ENCODE measurements at regions of chr7 and their contacts with region 1.

Region 1: GRCh38 chr7:73482746-73483145 is 39.3 kb downstream of the BAZ1B start:
- DNase-seq: no peak
- ATAC-seq: 0 out of 2 replicates have a peak, but pooled peaks have one; percentile 27
- H3K4me3 ChIP-seq: no peak overlapping the region
- H3K27ac ChIP-seq: no peak overlapping the region
- H3K4me1 ChIP-seq: no peaks in the 10 kb centered on the region
- H3K27me3 ChIP-seq: no peaks in the 10 kb centered on the region
- CTCF ChIP-seq: no peak

Region 2: DNA sequence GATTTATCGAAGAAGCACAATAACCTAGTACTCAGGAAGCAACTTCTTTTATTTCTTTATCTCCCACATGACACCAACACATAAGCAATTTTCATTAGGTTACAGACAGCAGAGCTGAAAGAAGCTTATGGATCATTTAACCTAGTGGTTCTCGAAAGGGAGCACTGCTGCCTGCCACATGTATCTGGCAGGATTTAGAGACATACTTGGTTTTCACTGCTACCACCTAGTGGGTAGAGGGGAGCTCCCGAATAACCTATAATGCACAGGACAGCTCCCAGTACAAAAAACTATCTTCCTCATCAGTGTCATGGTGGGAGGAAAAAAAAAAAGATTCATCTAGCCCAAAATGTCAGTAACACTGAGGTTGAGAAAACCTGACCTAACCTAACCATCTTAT is 14.6 kb before region 1 on chr7:
- CTCF ChIA-PET with region 1: no interaction called
- POLR2A ChIA-PET with region 1: interaction called, 12 read pairs
- in situ Hi-C with region 1: no loop called
- intact Hi-C with region 1: no loop called
- DNase-seq: no peak
- ATAC-seq: no peak
- H3K4me3 ChIP-seq: no peak overlapping the region
- H3K27ac ChIP-seq: no peak overlapping the region
- H3K4me1 ChIP-seq: no peaks in the 10 kb centered on the region
- H3K27me3 ChIP-seq: no peaks in the 10 kb centered on the region
- CTCF ChIP-seq: no peak

Measured in Panc1 (cell line).